A673 (cell line): ENCODE measurements at regions of chr1 and their contacts with region 1.

Region 1: GRCh38 chr1:155729031-155729898 is 40.4 kb downstream of the DAP3 start:
- DNase-seq: peak; percentile 78
- H3K4me3 ChIP-seq: no peak overlapping the region
- H3K27ac ChIP-seq: no peak overlapping the region
- H3K4me1 ChIP-seq: no peaks in the 10 kb centered on the region
- H3K27me3 ChIP-seq: no peaks in the 10 kb centered on the region
- CTCF ChIP-seq: peak; percentile 74

Region 2: DNA sequence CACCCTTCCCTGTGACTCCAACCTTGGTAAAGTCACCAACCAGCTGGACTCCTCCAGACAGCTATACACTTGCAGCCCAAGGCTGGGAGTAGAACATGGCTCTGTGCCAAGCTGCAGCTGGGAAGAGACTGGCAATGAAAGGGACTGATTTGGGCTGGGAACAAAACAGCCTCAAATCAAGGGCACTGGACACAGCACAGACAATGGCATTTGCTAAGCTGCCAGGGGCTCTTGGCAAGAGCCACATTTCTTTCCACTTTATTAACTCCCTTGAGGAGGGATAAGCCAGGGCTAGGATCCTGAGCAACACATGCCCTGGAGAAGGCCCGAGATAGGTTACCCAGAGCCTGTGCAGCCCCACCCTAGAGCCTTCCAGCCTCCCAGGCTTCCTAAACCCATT is 142.1 kb after region 1 on chr1:
- CTCF ChIA-PET with region 1: no interaction called
- POLR2A ChIA-PET with region 1: interaction called, 12 read pairs
- intact Hi-C with region 1: no loop called
- DNase-seq: peak; percentile 54
- H3K4me3 ChIP-seq: no peak overlapping the region
- H3K27ac ChIP-seq: no peak overlapping the region
- H3K4me1 ChIP-seq: peaks cover 15% of the 10 kb centered on the region
- H3K27me3 ChIP-seq: no peaks in the 10 kb centered on the region
- CTCF ChIP-seq: no peak

Region 3: GRCh38 chr1:156804572-156805243 is 1075.4 kb after region 1 on chr1:
- CTCF ChIA-PET with region 1: no interaction called
- POLR2A ChIA-PET with region 1: no interaction called
- intact Hi-C with region 1: no loop called
- DNase-seq: peak; percentile 78
- H3K4me3 ChIP-seq: no peak overlapping the region
- H3K27ac ChIP-seq: peak overlapping the region; percentile 79
- H3K4me1 ChIP-seq: peaks cover 57% of the 10 kb centered on the region
- H3K27me3 ChIP-seq: no peaks in the 10 kb centered on the region
- CTCF ChIP-seq: no peak